ENCODE measurements at regions of chr7 and their contacts with region 1.

Region 1: DNA sequence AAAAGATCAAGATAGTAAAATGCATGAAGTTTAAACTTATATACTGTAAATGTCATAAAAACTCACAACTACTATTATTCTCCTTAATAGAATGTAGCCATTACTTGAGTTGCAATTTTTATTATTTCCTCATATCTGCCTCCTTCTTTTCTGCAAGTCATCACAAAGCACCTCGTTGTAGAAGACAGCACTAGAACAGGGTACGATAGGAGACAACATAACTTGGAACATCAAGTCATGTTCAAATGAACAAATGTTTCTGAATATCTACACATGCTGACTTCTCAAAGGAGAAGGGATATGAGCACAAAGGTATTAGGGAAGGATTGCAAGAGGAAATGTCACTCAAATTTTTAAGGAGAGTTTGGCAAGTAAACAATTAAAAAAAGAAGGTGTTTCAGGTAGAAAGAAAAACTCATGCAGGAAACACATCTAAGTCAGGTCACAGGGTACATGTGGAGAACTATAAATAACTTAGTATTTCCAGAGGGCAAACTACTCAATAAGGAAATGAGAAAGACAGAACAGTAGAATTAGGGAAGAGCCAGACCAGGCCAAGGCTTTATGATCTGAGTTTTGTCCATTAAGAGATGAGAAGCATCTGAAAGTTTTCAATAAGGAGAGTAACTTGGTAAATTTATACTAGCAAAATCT is 186.7 kb downstream of the CRPPA start:
- DNase-seq: no peak
- ATAC-seq: peak in 4 of 8 donors; percentile 39 to 86 (median 66)
- H3K4me3 ChIP-seq: no peak overlapping the region
- H3K27ac ChIP-seq: peak overlapping the region in 1 of 10 donors; percentile 8
- H3K4me1 ChIP-seq: peaks cover 0 to 19% (median 0%) of the 10 kb centered on the region in 9 donors
- H3K27me3 ChIP-seq: no peaks in the 10 kb centered on the region
- CTCF ChIP-seq: no peak

Region 2: DNA sequence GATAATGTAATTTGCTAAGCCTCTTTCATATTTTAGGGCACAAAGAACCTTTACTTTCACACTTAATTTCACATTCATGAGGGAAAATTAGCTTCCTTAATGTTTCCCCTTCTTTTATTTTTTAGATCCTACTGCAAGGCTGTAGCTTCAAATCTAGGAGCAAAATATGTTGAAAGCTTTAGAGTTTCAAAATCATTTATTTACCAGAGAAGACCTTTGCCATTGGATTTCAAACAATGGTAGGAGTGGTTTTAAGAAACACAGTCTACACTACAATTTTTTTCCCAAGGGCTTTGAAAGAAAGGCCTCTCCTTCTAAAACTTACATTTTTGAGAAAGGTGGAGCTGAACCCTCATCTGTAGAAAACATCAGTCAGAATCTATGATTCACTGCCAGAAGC is 504.9 kb before region 1 on chr7:
- intact Hi-C with region 1: no loop called
- DNase-seq: no peak
- ATAC-seq: peak in 1 of 8 donors; percentile 42
- H3K4me3 ChIP-seq: no peak overlapping the region
- H3K27ac ChIP-seq: peak overlapping the region in 3 of 10 donors; percentile 26 to 46 (median 46)
- H3K4me1 ChIP-seq: no peaks in the 10 kb centered on the region
- H3K27me3 ChIP-seq: no peaks in the 10 kb centered on the region
- CTCF ChIP-seq: no peak

Region 3: DNA sequence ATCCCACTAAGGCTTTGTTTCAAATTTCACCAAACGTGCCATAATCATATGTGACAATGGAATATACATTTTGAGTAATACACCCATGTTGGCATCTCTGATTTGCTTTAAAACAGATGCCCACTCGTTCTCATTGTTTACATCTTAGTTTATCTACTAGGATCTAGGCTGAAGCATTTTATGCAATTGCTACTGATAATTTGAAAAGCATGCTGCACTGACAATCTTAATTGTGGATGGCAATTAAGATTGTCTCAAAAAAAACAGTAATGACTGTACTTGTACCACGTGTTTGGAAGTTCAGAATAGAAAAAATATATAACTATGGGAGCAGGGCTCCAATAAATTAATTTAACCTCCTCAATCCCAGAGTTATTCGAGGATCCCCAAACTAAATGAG is 50.0 kb after region 1 on chr7:
- intact Hi-C with region 1: loop called in 1 of 10 experiments (anchors 10 kb)
- DNase-seq: no peak
- ATAC-seq: no peak
- H3K4me3 ChIP-seq: no peak overlapping the region
- H3K27ac ChIP-seq: no peak overlapping the region
- H3K4me1 ChIP-seq: no peaks in the 10 kb centered on the region
- H3K27me3 ChIP-seq: no peaks in the 10 kb centered on the region
- CTCF ChIP-seq: no peak